GM18951 (cell line): ENCODE measurements at regions of chr2 and their contacts with region 1.

Region 1: DNA sequence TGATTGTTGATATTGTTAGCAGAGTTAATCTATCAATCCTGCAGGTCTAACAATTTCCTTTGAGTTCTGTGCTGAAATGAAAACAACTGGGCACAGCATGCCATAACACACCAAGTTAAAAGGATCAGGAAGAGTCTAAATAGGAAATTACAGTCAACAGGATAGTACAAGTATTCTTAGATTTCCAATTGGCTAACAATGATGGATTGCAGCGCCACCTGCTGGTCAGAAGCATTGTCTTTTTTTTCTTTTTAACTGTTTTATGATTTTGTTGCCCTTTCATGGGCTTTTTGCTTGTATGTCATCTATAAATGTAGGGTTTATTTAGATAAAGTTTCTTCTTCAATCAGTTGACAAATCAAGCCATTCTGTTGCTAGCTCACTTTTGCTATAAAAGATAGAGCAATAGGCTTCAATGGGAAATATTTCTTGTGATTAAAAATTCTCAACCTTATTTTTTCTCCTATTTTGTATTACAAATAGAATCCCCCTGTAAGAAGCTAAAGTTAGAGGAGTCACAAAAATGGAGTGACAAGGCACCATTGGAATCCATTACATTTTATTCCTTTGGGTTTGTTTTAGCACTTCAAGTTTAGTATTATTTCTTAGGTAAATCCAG is 40.8 kb upstream of the RPRM start:
- POLR2A ChIP-seq: no peak

Region 2: DNA sequence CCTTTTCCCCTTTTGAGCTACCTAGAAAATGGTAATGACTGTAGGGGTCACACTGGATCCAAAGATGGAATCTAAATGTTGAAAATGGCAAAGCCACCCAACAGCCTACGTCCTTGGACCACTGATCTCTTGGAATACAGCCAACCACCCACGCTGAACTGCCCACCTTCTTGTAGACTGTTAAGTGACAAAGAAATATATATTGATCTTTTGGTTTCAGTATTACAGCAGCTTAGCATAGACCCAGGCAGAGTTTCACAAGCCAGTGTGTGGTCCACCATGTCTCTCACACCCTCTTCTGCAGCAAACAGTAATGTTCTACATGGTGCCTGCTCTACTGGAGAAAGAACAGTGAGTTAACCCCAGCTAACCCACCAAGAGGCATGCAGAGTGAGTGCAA is 1440.7 kb before region 1 on chr2:
- in situ Hi-C with region 1: no loop called
- POLR2A ChIP-seq: no peak

Region 3: GRCh38 chr2:152925547-152926327 is 593.6 kb before region 1 on chr2:
- in situ Hi-C with region 1: loop called (anchors 25 kb)
- POLR2A ChIP-seq: no peak